HEK293 (cell line): ENCODE measurements at regions of chr15 and their contacts with region 1.

Region 1: DNA sequence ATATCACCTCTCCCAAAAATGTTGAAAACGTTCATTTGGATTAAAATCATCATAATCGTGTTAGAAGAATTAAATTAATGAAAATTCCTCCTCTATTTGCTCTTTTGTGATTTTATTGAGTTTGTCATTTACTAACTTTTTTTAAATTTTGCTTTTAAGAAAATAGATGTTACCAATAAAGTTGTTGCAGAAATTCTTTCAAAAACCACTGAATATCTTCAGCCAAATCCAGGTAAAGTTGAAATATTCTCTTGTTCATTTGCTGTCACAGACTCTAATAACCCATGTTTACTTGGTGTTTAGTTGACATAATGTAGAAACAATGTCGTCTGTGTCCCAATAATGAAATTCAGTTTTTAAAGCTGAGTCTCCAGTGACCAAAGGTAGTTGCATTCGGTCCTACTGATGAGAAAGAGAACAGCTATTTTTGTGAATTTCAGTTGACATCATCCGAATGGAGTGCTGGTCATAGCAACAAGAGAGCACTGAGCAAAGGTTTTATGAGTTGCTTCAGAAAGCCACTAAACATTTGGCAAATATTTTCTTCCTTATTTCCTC is 88.9 kb upstream of the ADAMTSL3 start:
- H3K4me3 ChIP-seq: no peak overlapping the region
- H3K27ac ChIP-seq: no peak overlapping the region
- H3K4me1 ChIP-seq: no peaks in the 10 kb centered on the region
- CTCF ChIP-seq: no peak

Region 2: DNA sequence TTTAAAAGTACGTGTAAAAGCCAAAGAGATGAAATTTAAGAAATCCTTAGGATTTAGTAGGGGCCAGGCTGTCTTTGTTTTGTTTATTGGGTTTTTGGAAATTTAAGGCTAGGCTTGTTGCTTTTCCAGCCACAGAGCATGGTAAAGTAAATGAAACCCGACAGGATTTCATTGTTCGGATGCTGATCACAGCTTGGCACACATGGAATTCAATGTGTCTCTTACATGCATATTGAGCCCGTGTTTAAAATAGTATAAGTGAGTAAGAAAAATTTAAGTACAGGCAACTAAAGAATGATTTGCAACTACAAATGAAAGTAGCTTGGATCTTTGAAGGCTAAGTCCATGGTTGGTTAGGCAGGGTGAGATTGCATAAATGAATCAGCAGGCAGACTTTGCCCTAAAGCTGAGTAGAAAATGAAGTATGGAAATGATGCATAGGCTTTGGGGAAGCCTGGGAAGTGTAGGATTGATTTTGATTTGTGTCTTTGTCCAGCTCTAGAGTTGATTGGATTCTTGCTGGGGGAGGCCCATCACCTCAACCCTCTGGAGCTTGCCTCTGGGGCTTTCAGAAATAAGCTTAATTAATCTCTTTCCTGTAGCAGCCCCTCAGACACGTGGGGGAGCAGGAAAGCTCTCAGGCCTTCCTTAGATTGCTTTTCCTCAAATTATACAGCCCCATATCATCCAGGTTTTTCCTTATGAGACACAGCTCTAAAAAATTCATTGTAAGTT is 20.7 kb after region 1 on chr15:
- CTCF ChIA-PET with region 1: interaction called, 10 read pairs
- POLR2A ChIA-PET with region 1: no interaction called
- H3K4me3 ChIP-seq: no peak overlapping the region
- H3K27ac ChIP-seq: no peak overlapping the region
- H3K4me1 ChIP-seq: no peaks in the 10 kb centered on the region
- CTCF ChIP-seq: no peak